Uterus (tissue), 4 donors: ENCODE measurements at regions of chr9 and their contacts with region 1.

Region 1: GRCh38 chr9:75064307-75065025 is 23.5 kb downstream of the NMRK1 start:
- DNase-seq: peak in 1 of 2 donors; percentile 41
- H3K4me3 ChIP-seq: no peak overlapping the region
- H3K27ac ChIP-seq: peak overlapping the region; percentile 30 to 56
- H3K4me1 ChIP-seq: no peaks in the 10 kb centered on the region
- H3K27me3 ChIP-seq: no peaks in the 10 kb centered on the region
- CTCF ChIP-seq: no peak
- POLR2A ChIP-seq: no peak

Region 2: DNA sequence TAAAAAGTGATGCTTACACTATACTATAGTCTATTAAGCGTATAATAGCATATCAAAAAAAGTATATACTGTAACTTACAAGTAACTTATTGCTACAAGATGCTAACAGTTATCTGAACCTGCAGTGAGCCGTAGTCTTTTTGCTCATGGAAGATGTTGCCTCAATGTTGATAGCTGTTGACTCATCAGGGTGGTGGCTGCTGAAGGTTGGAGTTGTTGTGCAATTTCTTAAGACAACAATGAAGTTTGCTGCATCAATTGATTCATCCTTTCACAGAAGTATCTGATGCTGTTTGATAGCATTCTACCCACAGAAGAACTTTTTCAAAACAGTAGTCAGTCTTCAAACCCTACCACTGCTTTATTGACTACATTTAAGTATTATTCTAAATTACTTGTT is 103.9 kb before region 1 on chr9:
- intact Hi-C with region 1: loop called (anchors 10 kb)
- DNase-seq: no peak
- H3K4me3 ChIP-seq: no peak overlapping the region
- H3K27ac ChIP-seq: no peak overlapping the region
- H3K4me1 ChIP-seq: no peaks in the 10 kb centered on the region
- H3K27me3 ChIP-seq: no peaks in the 10 kb centered on the region
- CTCF ChIP-seq: no peak
- POLR2A ChIP-seq: no peak

Region 3: GRCh38 chr9:75200892-75201470 is 136.5 kb after region 1 on chr9:
- intact Hi-C with region 1: no loop called
- DNase-seq: no peak
- H3K4me3 ChIP-seq: no peak overlapping the region
- H3K27ac ChIP-seq: no peak overlapping the region
- H3K4me1 ChIP-seq: no peaks in the 10 kb centered on the region
- H3K27me3 ChIP-seq: no peaks in the 10 kb centered on the region
- CTCF ChIP-seq: peak; percentile 40 to 53 (median 46)
- POLR2A ChIP-seq: no peak

Region 4: DNA sequence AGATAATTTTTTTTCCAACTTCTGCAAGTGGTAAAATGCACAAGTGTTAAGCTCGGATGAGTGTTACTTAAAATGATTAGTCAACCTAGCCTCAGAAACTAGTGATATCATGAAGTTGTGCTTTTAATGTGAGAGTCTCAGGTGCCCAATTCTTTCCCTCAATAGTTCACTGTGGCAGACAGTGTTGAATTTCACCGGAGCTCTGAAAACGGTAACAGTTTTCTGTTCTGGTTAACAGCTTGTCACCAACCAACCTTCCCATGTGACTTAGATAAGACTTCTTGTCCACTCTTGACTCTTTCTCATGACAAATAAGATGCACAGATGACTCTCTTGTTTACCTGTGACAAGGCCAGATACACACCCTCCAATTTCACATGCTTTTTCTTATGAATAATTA is 149.3 kb after region 1 on chr9:
- intact Hi-C with region 1: no loop called
- DNase-seq: no peak
- H3K4me3 ChIP-seq: no peak overlapping the region
- H3K27ac ChIP-seq: no peak overlapping the region
- H3K4me1 ChIP-seq: no peaks in the 10 kb centered on the region
- H3K27me3 ChIP-seq: no peaks in the 10 kb centered on the region
- CTCF ChIP-seq: no peak
- POLR2A ChIP-seq: no peak

Region 5: GRCh38 chr9:75372499-75373268 is 308.2 kb after region 1 on chr9:
- intact Hi-C with region 1: no loop called
- DNase-seq: peak; percentile 37 to 41
- H3K4me3 ChIP-seq: no peak overlapping the region
- H3K27ac ChIP-seq: peak overlapping the region in 1 of 2 donors; percentile 36
- H3K4me1 ChIP-seq: no peaks in the 10 kb centered on the region
- H3K27me3 ChIP-seq: no peaks in the 10 kb centered on the region
- CTCF ChIP-seq: no peak
- POLR2A ChIP-seq: no peak